ENCODE measurements at regions of chr11 and their contacts with region 1.

Region 1: DNA sequence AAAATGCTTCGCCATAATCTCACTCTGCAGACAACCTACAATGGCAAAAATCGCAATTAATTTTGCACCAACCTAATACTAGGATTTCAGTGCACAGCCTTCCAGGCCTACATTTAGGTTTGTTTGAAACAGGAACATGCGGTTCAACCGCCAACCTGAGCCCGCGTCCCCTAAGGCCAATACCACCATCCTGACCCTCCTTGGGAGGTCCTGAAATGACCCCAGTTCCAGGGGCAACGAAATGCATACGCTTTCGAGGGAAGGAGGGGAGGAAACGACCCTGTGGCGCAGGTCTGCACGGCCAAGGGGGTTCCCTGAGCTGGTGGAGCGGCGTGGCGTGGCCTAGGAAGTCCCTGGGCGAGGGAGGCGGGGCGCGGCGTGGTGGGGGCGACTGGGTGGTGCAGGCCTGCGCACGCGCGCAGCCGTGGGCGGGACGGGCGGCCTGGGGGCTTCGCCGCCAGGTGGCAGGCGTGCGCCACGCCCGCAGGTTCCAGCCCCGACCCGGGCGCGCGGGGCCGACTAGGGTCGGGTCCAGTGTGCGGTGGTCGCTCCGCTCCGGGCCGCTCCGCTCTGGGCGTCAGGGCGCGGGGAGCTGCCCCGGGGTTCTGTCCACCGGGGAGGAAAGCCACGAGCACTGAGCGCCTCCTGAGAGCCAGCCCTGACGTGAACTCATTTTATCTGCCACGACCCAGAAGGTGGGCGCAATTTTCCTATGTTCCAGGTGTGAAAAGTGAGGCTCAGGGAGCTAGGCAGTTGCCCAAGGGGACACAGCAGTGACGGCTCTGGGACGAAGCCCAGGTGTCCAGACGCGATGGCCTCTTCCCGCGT is 94.1 kb downstream of the SWAP70 start:
- DNase-seq: peak; percentile 87
- H3K4me3 Mint-ChIP-seq: peak overlapping the region; percentile 80
- H3K27ac Mint-ChIP-seq: peak overlapping the region; percentile 76
- H3K4me1 Mint-ChIP-seq: peaks cover 57% of the 10 kb centered on the region
- H3K27me3 Mint-ChIP-seq: peaks cover 2% of the 10 kb centered on the region

Region 2: DNA sequence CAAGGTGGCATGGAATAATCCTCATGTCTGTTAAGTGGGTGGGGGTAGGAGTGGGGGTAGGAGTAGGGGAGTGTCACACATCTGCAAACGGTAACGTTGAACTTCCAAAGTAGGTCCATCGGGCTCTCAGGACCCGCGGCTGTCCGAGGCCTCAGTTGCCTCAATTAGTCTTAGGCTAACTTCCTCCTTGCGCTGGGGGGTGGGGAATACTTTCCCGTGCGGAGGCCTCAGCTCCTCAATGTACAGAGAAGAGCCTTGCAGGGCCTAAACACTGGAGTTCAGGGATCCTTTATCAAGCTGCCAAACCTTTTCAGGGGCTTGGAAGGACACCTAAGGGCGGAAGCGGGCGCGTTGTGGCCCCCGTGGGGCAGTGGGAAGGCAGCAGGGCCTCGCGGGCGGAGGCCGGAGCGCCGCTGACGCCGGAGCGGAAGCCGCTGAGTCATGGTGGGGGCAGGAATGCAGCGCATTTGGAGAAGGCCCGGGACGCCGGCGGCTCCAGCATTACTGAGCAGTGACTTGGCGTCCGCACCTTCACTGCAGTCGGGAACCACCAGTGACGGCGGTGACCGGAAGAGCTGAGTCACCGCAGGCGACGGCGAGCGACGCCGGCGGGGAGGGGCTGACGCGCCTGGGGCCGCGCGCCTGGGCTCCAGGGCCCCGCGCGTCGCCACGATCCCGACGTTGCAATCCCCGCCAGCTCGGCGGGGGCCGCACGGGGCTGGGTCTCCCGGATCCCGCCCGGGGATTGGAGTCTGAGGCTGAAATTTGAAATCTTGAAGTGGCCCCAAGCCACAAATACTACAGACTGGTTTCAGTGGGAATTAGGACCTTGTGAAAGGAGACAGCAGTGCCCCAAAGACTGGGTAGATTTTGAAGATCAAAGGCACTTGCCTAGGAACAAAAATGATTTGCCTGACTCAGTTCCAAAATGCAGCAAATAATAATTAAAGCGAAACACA is 393.8 kb before region 1 on chr11:
- intact Hi-C with region 1: loop called (anchors 5 kb)
- DNase-seq: peak; percentile 76
- H3K4me3 Mint-ChIP-seq: peak overlapping the region; percentile 82
- H3K27ac Mint-ChIP-seq: peak overlapping the region; percentile 90
- H3K4me1 Mint-ChIP-seq: peaks cover 28% of the 10 kb centered on the region
- H3K27me3 Mint-ChIP-seq: peaks cover 5% of the 10 kb centered on the region

Region 3: GRCh38 chr11:9708544-9708943 is 49.5 kb before region 1 on chr11:
- intact Hi-C with region 1: no loop called
- DNase-seq: no peak
- H3K4me3 Mint-ChIP-seq: no peak overlapping the region
- H3K27ac Mint-ChIP-seq: no peak overlapping the region
- H3K4me1 Mint-ChIP-seq: peaks cover 2% of the 10 kb centered on the region
- H3K27me3 Mint-ChIP-seq: no peaks in the 10 kb centered on the region

Region 4: DNA sequence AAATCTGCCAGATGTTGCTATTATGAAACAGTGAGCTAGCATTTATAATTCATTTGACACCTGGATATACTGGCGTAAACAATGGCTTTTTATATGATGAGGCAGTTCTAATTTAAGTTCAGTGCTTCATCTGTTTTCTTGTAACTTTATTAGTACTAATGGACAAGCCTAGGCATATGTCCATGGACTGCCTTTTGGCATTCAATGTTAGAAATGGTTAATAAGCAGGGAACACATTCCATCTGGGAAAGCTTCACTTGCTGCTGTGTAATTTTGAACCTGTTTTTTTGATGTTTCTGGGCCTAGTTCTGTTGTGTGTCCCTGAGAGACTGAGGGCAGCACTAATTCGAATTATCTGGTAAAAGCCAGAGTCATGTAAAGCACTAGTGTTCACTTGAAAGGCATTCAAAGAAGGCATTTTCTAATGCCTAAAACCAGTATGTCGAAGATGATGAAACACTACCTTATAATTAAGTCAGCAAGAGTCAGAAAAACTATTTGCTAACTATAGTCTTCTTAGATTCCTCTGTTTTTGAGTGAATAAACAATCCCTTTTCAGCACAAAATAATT is 44.4 kb after region 1 on chr11:
- intact Hi-C with region 1: no loop called
- DNase-seq: no peak
- H3K4me3 Mint-ChIP-seq: no peak overlapping the region
- H3K27ac Mint-ChIP-seq: no peak overlapping the region
- H3K4me1 Mint-ChIP-seq: no peaks in the 10 kb centered on the region
- H3K27me3 Mint-ChIP-seq: no peaks in the 10 kb centered on the region

Region 5: DNA sequence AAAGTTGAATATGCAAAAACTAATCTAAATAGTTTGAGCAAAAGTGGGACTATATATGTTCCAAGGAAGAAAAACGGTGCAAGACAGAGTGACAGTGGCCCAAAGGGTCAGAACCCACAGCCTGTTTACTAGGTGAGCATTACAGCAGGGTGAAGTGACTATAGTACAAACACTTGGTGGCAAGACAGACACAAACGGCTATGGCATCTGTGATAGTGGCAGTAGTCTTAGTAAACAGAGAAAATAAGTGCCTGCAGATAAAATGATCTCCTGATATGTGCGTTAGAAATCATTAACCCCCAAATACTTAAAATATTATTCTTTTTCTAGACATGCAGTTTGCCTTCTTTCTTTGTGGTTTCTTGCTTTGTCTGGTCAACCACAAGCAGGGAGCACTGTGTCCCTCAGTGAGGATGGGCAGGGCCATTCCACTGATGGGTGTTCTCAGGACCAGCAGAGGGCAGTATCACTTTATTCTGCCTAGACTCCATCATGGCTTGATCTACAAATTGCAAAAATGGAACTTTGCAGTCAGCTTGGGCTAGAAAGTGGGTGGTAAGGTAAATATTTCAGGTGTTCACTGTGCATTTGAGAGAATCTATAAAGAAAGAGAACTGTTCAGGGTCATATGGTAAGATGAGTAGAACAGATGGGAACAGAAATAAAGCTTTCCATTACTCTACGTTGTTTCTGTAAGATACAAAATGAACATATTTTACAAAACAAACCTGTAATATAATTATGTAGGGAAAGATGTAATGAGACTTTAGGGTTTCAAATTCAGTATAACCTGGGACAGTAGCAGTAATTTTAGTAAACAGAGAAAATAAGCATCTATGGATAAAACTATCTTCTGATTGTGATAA is 104.1 kb after region 1 on chr11:
- intact Hi-C with region 1: loop called (anchors 1 kb)
- DNase-seq: peak; percentile 11
- H3K4me3 Mint-ChIP-seq: no peak overlapping the region
- H3K27ac Mint-ChIP-seq: peak overlapping the region; percentile 1
- H3K4me1 Mint-ChIP-seq: peaks cover 34% of the 10 kb centered on the region
- H3K27me3 Mint-ChIP-seq: peaks cover 4% of the 10 kb centered on the region

Region 6: GRCh38 chr11:10076458-10077141 is 318.6 kb after region 1 on chr11:
- intact Hi-C with region 1: loop called (anchors 1 kb)
- DNase-seq: peak; percentile 10
- H3K4me3 Mint-ChIP-seq: no peak overlapping the region
- H3K27ac Mint-ChIP-seq: no peak overlapping the region
- H3K4me1 Mint-ChIP-seq: no peaks in the 10 kb centered on the region
- H3K27me3 Mint-ChIP-seq: no peaks in the 10 kb centered on the region

Region 7: DNA sequence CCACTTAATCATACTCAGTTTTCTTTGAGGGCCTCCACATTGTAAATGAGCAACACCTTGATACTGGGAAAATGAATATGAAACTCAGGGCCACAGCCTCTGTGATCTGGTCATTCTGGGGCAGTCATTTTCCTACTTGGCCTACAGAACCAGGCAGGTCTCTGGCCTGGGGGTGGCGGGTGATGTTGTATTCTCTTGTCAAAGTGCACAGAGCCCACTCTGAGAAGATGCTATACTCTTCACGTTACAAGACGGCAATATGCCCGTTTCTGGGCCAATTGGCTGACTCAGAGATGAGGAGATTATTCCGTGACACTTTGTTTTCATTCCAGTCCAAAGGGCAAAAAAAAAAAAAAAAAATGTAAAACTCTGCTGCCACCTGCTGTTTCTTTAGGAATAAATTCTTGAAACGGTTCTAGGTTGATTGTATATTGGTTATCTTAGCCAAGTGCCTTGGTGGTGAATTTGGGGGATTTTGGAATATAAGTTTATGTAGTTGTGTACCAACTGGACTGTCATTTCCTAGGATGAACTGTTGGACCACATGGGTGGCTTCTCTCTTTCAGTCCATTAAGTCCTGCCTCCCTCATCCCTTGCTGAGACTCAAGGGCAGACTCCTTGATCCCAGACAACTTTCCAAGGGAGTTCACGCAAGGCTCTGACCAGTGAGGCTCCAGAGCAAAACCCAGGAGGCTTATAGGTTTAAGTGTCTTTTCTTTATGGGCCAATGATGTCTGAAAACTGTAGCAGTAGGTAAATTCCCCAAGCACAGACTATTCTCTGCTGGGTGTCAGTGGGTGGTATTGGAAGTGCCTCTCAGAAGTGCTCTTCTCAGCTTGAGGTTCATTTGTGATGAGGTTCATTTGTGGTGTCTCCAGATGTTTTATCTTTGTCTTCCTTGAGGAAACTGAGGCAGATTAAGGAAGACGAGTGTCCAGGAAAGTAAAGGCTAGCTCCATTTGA is 565.1 kb after region 1 on chr11:
- intact Hi-C with region 1: loop called (anchors 1 kb)
- DNase-seq: no peak
- H3K4me3 Mint-ChIP-seq: no peak overlapping the region
- H3K27ac Mint-ChIP-seq: peak overlapping the region; percentile 88
- H3K4me1 Mint-ChIP-seq: peaks cover 20% of the 10 kb centered on the region
- H3K27me3 Mint-ChIP-seq: peaks cover 16% of the 10 kb centered on the region

Region 8: DNA sequence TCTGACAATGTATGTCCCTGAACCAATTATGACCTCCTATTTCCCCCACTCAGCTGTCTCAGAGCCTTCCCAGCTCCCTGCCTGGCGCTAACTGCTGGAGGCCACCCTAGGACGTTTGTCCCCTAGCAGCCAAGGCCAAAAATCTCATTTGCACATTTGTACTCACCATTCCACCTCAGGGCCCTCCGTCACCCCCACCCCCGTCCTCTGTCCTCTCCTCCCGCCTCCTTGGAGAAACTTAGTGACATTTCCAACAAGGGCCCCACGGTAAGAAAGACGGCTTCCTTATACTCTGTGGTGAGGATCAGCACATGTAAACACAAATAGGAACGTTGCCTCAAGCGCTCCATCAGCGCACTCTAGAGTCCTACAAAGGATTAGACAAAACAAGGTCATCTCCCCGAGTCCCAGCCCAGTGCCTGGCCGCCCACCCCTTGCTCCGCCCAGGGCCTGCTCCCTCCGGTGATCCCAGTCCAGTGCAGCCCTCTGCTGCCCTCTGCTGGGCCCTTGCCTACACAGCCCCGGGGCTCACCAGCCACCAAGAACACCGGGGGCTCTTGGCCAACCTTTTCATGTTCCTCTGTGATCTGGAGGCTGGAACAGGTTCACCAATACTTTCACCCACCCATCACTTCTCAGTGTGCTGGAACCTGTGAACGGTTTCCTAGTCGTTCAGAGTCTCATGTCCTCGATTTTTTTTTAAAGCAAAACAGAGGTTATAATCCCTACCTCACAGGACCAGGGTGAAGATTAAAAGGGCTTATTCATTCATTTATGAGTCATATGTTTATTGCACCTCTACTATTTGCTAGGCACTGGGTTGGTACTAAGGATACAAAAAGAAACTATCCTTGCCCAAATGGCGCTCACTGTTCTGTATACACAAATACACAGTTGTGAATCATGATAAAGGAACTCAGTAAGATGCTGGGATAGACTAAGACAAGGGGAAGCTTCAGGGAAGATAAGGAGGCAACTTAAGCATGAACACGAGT is 977.8 kb after region 1 on chr11:
- intact Hi-C with region 1: loop called (anchors 5 kb)
- DNase-seq: peak; percentile 78
- H3K4me3 Mint-ChIP-seq: peak overlapping the region; percentile 37
- H3K27ac Mint-ChIP-seq: no peak overlapping the region
- H3K4me1 Mint-ChIP-seq: peaks cover 10% of the 10 kb centered on the region
- H3K27me3 Mint-ChIP-seq: peaks cover 10% of the 10 kb centered on the region

Region 9: GRCh38 chr11:10797531-10797930 is 1039.5 kb after region 1 on chr11:
- intact Hi-C with region 1: no loop called
- DNase-seq: no peak
- H3K4me3 Mint-ChIP-seq: no peak overlapping the region
- H3K27ac Mint-ChIP-seq: no peak overlapping the region
- H3K4me1 Mint-ChIP-seq: peaks cover 62% of the 10 kb centered on the region
- H3K27me3 Mint-ChIP-seq: peaks cover 3% of the 10 kb centered on the region

Measured in activated T-helper 1 cell treated with anti-CD3 and anti-CD28 coated beads, Interleukin-12 subunit alpha, Interleukin-12 subunit beta, Interleukin-2, Interleukin-4 antibody, amounts not matched to agents 30 ng/mL and 10 ng/mL and 1 ng/mL, durations not matched to agents 14 hours and 24 hours and 36 hours (primary cell).